AG04449 (cell line): ENCODE measurements at regions of chr2 and their contacts with region 1.

Region 1: GRCh38 chr2:219294356-219295351 is 14.5 kb downstream of the PTPRN start:
- DNase-seq: no peak
- H3K4me3 ChIP-seq: peak overlapping the region; percentile 59
- CTCF ChIP-seq: peak; percentile 96

Region 2: DNA sequence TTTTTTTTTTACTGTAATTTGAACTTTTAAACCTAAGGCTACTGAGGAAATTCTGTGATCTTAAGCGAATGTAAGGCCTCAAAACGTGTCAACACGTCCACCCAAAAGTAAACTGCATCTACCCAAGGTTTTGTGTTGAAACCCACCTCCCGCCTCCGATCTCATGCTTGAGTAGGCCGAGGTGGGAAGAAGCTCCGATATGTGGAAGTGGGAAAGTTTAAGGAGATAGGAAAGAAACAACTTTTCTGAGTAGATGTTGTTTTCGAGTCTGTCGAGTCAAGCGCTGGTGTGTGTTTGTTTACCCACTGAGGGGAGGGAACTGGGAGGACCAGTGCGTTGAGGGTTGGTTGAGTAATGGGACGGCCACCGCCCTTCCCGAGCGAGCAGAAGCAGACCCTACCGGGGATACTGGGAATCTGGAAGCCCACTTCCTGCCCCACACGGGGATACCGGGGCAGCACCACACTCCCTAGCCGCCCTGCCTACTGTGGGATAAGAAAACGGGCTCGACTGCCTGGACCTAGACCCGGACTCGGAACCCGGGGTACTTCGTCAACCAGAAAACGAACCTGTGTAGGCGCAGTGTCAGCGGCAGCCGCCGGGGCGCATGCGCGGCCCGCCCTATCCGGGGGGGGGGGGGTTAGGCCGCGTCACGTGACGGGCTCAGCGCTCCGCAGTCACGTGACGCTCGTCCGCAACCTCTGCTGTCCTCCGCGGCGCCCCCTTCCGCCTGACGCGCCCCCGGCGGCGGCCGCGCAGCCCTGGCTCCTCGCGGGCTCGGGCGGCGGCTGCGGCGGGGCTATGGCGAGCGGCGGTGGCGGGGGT is 116.9 kb before region 1 on chr2 and contains the start of gene RETREG2:
- CTCF ChIA-PET with region 1: interaction called, 154 read pairs
- POLR2A ChIA-PET with region 1: interaction called, 3 read pairs
- DNase-seq: no peak
- H3K4me3 ChIP-seq: peak within 1 kb of the TSS; percentile 84
- CTCF ChIP-seq: peak; percentile 65

Region 3: GRCh38 chr2:219229305-219230058 is 65.2 kb before region 1 on chr2 and contains the starts of genes ANKZF1 and ATG9A:
- CTCF ChIA-PET with region 1: interaction called, 81 read pairs
- POLR2A ChIA-PET with region 1: interaction called, 3 read pairs
- DNase-seq: peak; percentile 86
- H3K4me3 ChIP-seq: peak within 1 kb of the TSS; percentile 92
- CTCF ChIP-seq: no peak

Region 4: DNA sequence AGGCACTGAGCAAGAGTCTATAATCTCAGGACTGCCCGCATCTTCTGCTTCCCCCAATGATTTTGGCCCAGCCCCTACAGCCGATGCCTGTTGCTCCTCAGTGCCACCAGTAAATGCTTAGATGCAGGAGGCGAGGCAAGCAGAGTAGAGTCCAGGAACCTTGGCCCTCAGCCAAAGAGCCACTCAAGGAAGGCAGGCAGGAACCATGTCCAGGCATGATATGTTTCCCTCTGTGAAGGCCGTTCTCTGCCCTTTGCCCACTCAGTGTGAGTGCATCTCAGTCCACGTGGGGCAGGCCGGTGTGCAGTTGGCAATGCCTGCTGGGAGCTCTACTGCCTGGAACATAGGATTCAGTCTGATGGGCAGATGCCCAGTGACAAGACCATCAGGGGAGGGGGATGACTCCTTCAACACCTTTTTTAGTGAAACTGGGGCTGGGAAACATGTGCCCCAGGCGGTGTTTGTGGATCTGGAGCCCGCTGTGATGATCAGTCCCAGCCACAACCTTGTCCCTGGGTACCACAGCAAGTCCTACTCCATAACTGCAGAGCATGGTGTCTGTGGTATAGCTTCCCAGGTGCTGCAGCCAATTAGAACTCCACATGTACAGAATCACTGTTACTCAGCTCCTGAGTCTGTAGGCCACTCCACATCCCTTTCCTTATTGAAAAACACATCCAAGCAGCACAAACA is 25.1 kb before region 1 on chr2:
- CTCF ChIA-PET with region 1: interaction called, 691 read pairs
- POLR2A ChIA-PET with region 1: no interaction called
- DNase-seq: no peak
- H3K4me3 ChIP-seq: no peak overlapping the region
- CTCF ChIP-seq: no peak

Region 5: GRCh38 chr2:219323434-219323833 is 28.8 kb after region 1 on chr2:
- CTCF ChIA-PET with region 1: interaction called, 15 read pairs
- POLR2A ChIA-PET with region 1: no interaction called
- DNase-seq: no peak
- H3K4me3 ChIP-seq: no peak overlapping the region
- CTCF ChIP-seq: no peak

Region 6: GRCh38 chr2:219530048-219530963 is 235.7 kb after region 1 on chr2:
- CTCF ChIA-PET with region 1: interaction called, 18 read pairs
- POLR2A ChIA-PET with region 1: no interaction called
- DNase-seq: no peak
- H3K4me3 ChIP-seq: peak overlapping the region; percentile 49
- CTCF ChIP-seq: peak; percentile 98